ENCODE measurements at regions of chr1 and their contacts with region 1.

Region 1: GRCh38 chr1:31938174-31938950 is at the start of gene PTP4A2:
- DNase-seq: peak; percentile 91 to 94
- ATAC-seq: peak; percentile 76 to 78
- H3K4me3 ChIP-seq: peak within 1 kb of the TSS; percentile 81 to 91 (median 84)
- H3K27ac ChIP-seq: peak within 1 kb of the TSS; percentile 97 to 99 (median 98)
- H3K4me1 ChIP-seq: peaks cover 43 to 51% of the 10 kb centered on the region in 2 donors
- H3K27me3 ChIP-seq: no peaks in the 10 kb centered on the region
- CTCF ChIP-seq: peak in 4 of 5 experiments; percentile 82 to 93 (median 88)
- POLR2A ChIP-seq: peak; percentile 99 to 100
- total RNA-seq, gene PTP4A2: 294 to 522 (median 353) TPM

Region 2: DNA sequence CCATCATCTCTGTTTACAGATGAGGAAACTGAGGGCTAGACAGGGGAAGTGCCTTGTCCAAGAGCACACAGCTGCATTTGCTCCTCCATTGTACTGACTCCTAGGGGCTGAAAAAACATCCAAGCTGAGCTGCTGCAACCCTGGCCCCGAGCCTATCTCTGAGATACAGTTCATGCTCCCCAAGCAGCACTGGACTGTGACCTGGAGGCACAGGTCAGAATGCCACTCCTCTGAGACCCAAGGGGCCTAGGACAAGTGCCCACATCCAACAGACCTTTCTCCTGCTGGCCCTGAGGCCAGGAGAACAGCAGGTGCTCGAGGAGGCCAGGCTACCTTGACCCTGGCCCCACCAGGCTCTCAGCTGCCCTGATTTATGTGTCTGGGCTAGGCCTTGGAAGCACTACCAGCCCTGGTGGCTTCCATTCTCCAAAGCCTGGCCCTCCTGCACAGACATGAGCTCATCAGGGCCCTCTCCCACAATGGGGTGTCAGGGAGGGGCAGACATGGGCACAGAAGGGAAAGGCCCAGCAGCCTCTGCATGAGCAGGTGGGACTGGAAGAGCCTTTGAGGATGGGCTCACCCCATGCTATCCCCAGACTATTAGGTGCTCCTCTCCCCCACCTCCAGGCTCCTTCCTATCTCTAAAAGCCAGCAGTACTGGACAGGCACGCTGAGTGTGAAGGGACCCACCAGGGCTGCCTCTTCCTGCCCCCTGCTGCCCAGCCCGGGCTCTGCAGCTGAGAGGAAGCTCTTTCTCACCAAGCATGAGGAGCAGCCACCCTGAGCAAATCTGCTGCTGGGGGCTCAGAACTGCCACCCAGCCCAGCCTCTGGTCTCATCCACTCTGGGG is 193.0 kb before region 1 on chr1:
- in situ Hi-C with region 1: no loop called
- intact Hi-C with region 1: no loop called
- DNase-seq: peak in 1 of 2 donors; percentile 29
- ATAC-seq: peak; percentile 30 to 46
- H3K4me3 ChIP-seq: no peak overlapping the region
- H3K27ac ChIP-seq: no peak overlapping the region
- H3K4me1 ChIP-seq: peaks cover 0 to 1% of the 10 kb centered on the region in 2 donors
- H3K27me3 ChIP-seq: no peaks in the 10 kb centered on the region
- CTCF ChIP-seq: peak in 4 of 5 experiments; percentile 53 to 72 (median 62)
- POLR2A ChIP-seq: no peak

Region 3: GRCh38 chr1:32205401-32206370 is 267.3 kb after region 1 on chr1 and contains the start of gene IQCC:
- in situ Hi-C with region 1: no loop called
- intact Hi-C with region 1: loop called (anchors 10 kb)
- DNase-seq: peak; percentile 72 to 76
- ATAC-seq: peak; percentile 64 to 75
- H3K4me3 ChIP-seq: peak within 1 kb of the TSS; percentile 61 to 76 (median 73)
- H3K27ac ChIP-seq: peak within 1 kb of the TSS; percentile 60 to 74 (median 72)
- H3K4me1 ChIP-seq: peaks cover 30 to 34% of the 10 kb centered on the region in 2 donors
- H3K27me3 ChIP-seq: no peaks in the 10 kb centered on the region
- CTCF ChIP-seq: no peak
- POLR2A ChIP-seq: peak; percentile 41 to 44
- total RNA-seq, gene IQCC: 0.49 to 0.93 (median 0.83) TPM

Measured in gastrocnemius medialis (tissue), 4 donors.